Activated naive CD8-positive, alpha-beta T cell treated with anti-CD3 and anti-CD28 coated beads, Interleukin-2, amount 10 ng/mL, durations not matched to agents 7 days and 5 days (primary cell): ENCODE measurements at regions of chr21 and their contacts with region 1.

Region 1: DNA sequence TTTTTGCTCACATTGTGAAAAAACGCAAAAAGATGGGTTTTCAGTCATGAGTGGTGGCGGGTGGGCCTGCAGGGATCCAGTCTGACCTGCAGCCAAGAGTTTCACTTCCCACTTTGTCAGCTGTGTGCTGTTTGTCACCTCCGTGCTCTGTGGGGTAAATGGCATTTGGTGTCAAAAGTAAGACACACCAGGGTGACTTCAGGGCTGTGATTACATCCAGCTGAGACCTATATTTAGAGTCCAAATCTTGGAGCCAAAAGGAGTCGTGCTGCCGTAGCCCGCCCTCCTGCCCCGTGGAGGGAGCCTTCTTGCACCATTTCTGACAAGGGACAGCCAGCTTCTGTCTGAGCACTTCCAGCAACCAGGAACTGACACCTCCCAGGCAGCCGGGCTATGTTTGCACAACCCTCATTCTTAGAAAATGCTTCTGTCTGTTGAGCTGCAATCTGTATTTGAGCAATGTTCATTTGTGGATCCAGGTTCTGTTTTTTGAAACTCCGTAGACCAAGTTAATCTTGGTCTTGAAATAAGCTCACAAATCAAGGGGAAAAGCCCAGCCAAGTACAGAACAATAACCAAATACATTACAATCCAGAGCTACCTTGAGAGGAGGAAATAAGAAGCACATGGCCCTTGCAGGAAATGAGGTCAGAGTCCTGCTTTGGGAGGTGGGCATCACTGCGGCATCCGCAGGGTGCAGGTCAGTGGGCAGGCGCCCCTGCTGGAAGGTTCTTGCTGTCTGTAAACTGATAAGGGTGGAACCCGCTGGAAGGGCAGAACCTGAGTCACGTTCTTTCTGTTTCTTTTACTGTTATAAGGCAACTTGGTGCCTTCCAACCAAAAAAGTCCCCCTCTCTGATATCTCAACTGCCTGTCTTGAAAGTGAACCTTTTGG is 14.4 kb downstream of the ABCG1 start:
- DNase-seq: peak; percentile 71
- ATAC-seq: peak; percentile 49
- H3K4me3 Mint-ChIP-seq: peak overlapping the region; percentile 79
- H3K27ac Mint-ChIP-seq: peak overlapping the region; percentile 92
- H3K4me1 Mint-ChIP-seq: peaks cover 77% of the 10 kb centered on the region
- H3K27me3 Mint-ChIP-seq: no peaks in the 10 kb centered on the region

Region 2: GRCh38 chr21:42187976-42188653 is 45.2 kb before region 1 on chr21:
- POLR2A ChIA-PET with region 1: interaction called, 41 read pairs
- DNase-seq: peak; percentile 73
- ATAC-seq: peak; percentile 93
- H3K4me3 Mint-ChIP-seq: peak overlapping the region; percentile 61
- H3K27ac Mint-ChIP-seq: peak overlapping the region; percentile 97
- H3K4me1 Mint-ChIP-seq: peaks cover 68% of the 10 kb centered on the region
- H3K27me3 Mint-ChIP-seq: peaks cover 6% of the 10 kb centered on the region

Region 3: DNA sequence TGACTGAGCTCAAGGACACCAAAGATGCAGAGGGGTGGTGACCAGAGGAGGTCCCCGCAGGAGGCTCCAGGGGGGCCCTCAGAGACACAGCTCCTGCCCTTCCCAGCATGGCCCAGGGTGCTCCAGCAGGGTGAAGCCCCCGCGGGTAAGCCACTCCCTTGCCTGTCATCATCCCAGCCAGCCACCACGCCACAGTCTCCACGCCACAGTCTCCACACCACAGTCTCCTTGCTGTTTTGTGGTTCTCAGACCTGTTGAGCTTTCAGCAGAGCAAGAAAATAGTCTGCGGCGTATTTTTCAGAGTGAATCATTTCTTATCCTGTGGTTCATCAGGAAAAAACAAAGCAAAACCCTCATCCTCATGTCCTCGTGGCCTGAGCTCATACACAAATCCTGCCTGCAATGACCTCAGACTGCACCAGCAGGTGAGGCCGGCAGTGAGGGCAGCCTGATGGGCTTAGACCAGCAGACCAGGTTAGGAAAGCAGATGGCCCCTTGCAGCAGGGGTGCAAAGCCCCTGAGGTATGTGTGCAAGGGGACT is 40.1 kb before region 1 on chr21:
- POLR2A ChIA-PET with region 1: interaction called, 41 read pairs
- DNase-seq: peak; percentile 85
- ATAC-seq: peak; percentile 53
- H3K4me3 Mint-ChIP-seq: peak overlapping the region; percentile 67
- H3K27ac Mint-ChIP-seq: peak overlapping the region; percentile 40
- H3K4me1 Mint-ChIP-seq: peaks cover 62% of the 10 kb centered on the region
- H3K27me3 Mint-ChIP-seq: peaks cover 9% of the 10 kb centered on the region

Region 4: DNA sequence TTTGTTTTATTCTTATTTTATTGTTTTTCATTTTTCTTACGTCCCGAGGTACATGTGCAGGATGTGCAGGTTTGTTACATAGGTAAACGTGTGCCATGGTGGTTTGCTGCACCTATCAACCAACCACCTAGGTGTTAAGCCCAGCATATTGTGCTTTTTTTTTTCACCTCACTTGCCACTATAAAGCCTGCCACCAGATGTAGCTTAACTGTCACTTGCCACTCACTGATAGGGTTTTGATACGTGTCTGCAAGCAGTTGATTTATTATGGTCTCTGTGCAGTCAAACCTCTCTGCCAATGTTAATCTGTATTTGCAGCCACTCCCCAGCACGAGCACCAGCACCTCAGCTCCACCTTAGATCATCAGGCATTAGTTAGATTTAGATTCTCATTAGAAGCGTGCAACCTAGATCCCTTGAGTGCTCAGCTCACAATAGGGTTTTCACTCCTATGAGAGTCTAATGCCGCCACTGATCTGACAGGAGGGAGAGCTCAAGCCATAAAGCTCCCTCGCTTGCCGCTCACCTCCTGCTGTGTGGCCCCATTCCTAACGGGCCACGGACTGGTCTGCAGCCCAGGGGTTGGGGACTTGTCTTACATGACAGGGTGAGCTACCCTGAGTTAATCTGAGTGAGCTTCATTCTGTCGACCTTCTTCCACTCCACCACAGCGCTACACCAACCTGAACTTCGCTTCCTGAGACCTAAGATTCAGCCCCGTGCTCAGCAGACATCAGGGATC is 32.2 kb before region 1 on chr21:
- POLR2A ChIA-PET with region 1: interaction called, 10 read pairs
- DNase-seq: no peak
- ATAC-seq: no peak
- H3K4me3 Mint-ChIP-seq: no peak overlapping the region
- H3K27ac Mint-ChIP-seq: no peak overlapping the region
- H3K4me1 Mint-ChIP-seq: peaks cover 23% of the 10 kb centered on the region
- H3K27me3 Mint-ChIP-seq: peaks cover 8% of the 10 kb centered on the region

Region 5: GRCh38 chr21:42220138-42220701 is 13.1 kb before region 1 on chr21:
- POLR2A ChIA-PET with region 1: interaction called, 111 read pairs
- DNase-seq: peak; percentile 73
- ATAC-seq: peak; percentile 86
- H3K4me3 Mint-ChIP-seq: peak overlapping the region; percentile 91
- H3K27ac Mint-ChIP-seq: peak overlapping the region; percentile 89
- H3K4me1 Mint-ChIP-seq: peaks cover 18% of the 10 kb centered on the region
- H3K27me3 Mint-ChIP-seq: no peaks in the 10 kb centered on the region

Region 6: DNA sequence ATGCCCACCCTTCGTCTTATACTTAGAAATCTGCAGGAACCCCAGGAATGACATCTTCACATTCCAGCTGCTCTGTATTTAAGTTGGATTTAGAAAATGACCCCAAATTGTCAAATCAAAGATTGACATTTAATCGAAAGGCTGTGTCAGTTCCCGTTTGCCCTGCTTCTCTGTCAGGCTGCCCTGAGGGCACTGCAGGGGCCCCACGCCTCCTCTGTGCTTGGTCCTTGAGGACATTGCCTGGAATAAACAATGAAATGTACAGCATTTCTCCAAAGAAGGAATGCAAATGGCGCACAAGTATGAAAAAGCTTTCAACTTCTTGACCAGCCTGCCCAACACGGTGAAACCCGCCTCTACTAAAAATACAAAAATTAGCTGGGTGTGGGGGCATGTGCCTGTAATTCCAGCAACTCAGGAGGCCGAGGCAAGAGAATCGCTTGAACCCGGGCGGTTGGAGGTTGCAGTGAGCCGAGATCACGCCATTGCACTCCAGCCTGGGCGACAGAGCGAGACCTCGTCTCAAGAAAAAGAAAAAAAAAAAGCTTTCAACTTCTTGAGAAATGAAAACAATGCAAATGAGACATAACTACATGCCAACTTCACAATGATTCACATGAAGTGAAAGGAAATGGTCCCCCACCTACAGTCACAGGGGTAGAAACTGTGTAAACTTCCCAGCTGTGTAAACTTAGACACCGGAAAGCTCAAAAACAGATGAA is 159.6 kb after region 1 on chr21:
- POLR2A ChIA-PET with region 1: no interaction called
- DNase-seq: no peak
- ATAC-seq: peak; percentile 78
- H3K4me3 Mint-ChIP-seq: peak overlapping the region; percentile 71
- H3K27ac Mint-ChIP-seq: peak overlapping the region; percentile 85
- H3K4me1 Mint-ChIP-seq: peaks cover 43% of the 10 kb centered on the region
- H3K27me3 Mint-ChIP-seq: no peaks in the 10 kb centered on the region